Activated naive CD4-positive, alpha-beta T cell treated with anti-CD3 and anti-CD28 coated beads for 36 hours (primary cell): ENCODE measurements at regions of chr10 and their contacts with region 1.

Region 1: GRCh38 chr10:118241229-118242137 is 100.6 kb downstream of the FAM204A start:
- DNase-seq: peak; percentile 82
- H3K4me3 Mint-ChIP-seq: no peak overlapping the region
- H3K27ac Mint-ChIP-seq: no peak overlapping the region
- H3K4me1 Mint-ChIP-seq: no peaks in the 10 kb centered on the region
- H3K27me3 Mint-ChIP-seq: peaks cover 52% of the 10 kb centered on the region

Region 2: GRCh38 chr10:117442944-117443685 is 798.4 kb before region 1 on chr10:
- CTCF ChIA-PET with region 1: no interaction called
- intact Hi-C with region 1: loop called (anchors 1 kb)
- DNase-seq: peak; percentile 65
- H3K4me3 Mint-ChIP-seq: no peak overlapping the region
- H3K27ac Mint-ChIP-seq: no peak overlapping the region
- H3K4me1 Mint-ChIP-seq: no peaks in the 10 kb centered on the region
- H3K27me3 Mint-ChIP-seq: peaks cover 19% of the 10 kb centered on the region

Region 3: GRCh38 chr10:117860823-117861222 is 380.7 kb before region 1 on chr10:
- CTCF ChIA-PET with region 1: interaction called, 5 read pairs
- intact Hi-C with region 1: loop called (anchors 2 kb)
- DNase-seq: no peak
- H3K4me3 Mint-ChIP-seq: no peak overlapping the region
- H3K27ac Mint-ChIP-seq: no peak overlapping the region
- H3K4me1 Mint-ChIP-seq: no peaks in the 10 kb centered on the region
- H3K27me3 Mint-ChIP-seq: peaks cover 11% of the 10 kb centered on the region

Region 4: DNA sequence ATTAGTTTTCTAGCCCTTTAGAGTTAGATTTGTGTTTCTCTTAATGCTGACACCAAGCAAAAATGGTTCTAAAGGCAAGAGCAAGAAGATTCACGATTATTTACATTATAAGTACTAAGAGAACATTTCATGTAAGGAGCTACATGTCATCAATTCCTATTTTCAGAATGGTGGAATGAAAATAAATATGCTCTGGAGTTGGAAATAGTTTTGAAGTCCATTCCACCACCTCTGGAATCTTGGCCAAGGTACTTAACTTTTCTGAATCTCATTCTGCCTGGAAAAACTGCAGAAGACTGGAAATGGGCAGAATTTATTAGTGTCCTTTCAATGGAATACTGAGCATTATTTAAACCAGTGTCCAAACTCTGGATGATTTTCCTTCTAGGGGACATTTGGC is 69.6 kb before region 1 on chr10:
- CTCF ChIA-PET with region 1: no interaction called
- intact Hi-C with region 1: no loop called
- DNase-seq: no peak
- H3K4me3 Mint-ChIP-seq: no peak overlapping the region
- H3K27ac Mint-ChIP-seq: no peak overlapping the region
- H3K4me1 Mint-ChIP-seq: no peaks in the 10 kb centered on the region
- H3K27me3 Mint-ChIP-seq: peaks cover 24% of the 10 kb centered on the region

Region 5: DNA sequence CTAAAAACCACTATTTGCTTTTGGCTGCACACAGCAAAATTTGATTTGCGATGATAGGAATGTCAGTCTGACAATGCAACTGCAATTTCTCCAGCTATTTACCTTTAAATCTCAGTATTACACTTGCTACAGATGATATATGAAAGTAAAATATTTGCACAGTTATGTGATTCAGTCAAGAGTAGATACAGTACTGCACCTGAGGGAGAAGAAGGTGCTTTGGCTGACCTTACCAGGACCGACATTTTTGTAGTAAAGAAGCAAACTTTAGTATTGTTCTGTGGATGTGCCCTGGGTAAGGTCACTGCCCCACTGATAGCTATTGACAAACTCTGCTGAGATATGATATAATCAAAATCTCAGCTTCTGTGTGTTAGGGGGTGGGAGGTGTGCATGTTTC is 58.3 kb before region 1 on chr10:
- CTCF ChIA-PET with region 1: no interaction called
- intact Hi-C with region 1: no loop called
- DNase-seq: no peak
- H3K4me3 Mint-ChIP-seq: no peak overlapping the region
- H3K27ac Mint-ChIP-seq: no peak overlapping the region
- H3K4me1 Mint-ChIP-seq: no peaks in the 10 kb centered on the region
- H3K27me3 Mint-ChIP-seq: peaks cover 17% of the 10 kb centered on the region

Region 6: GRCh38 chr10:118439824-118440223 is 198.3 kb after region 1 on chr10:
- CTCF ChIA-PET with region 1: no interaction called
- intact Hi-C with region 1: no loop called
- DNase-seq: no peak
- H3K4me3 Mint-ChIP-seq: no peak overlapping the region
- H3K27ac Mint-ChIP-seq: no peak overlapping the region
- H3K4me1 Mint-ChIP-seq: no peaks in the 10 kb centered on the region
- H3K27me3 Mint-ChIP-seq: peaks cover 35% of the 10 kb centered on the region

Region 7: DNA sequence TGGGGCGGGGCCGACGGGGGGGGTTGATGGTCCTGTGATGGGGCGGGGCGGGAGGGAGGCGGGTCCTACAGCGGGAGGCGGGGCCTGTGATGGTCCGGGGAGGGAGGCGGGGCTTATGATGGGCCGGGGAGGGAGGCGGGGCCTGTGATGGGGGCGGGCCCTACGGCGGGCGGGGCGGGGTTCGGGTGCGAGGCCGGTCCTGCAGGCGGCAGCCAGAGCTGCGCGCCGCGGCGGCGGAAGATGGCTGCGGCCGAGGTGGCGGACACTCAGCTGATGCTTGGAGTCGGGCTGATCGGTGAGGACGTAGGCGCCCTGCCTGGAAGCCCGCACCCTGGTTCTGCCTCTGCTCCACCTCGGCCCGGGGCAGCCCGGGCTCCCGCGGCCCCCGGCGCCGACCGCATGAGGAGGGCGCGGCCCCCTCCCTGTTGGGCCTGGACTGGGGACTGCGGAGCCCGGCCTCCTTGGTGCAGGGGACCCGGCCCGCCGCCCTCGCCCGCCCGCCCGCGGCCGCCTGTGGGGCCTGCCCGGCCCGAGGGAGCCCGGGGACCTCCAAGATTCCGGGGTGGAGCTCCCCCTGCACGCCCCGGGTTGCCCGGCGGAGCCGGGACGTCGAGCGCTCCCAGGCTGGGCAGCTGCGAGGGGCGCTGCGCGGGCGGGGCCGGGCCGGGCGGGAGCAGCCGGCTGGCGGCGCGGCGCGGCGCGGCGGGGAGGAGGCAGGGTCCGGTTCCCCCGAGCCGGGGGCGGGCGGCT is 862.6 kb after region 1 on chr10 and contains the start of gene DENND10:
- CTCF ChIA-PET with region 1: no interaction called
- intact Hi-C with region 1: no loop called
- DNase-seq: peak; percentile 81
- H3K4me3 Mint-ChIP-seq: peak within 1 kb of the TSS; percentile 72
- H3K27ac Mint-ChIP-seq: no peak within 1 kb of the TSS
- H3K4me1 Mint-ChIP-seq: peaks cover 6% of the 10 kb centered on the region
- H3K27me3 Mint-ChIP-seq: no peaks in the 10 kb centered on the region
- total RNA-seq, gene DENND10: 16.9 to 17.6 TPM